ENCODE measurements at regions of chr1 and their contacts with region 1.

Region 1: DNA sequence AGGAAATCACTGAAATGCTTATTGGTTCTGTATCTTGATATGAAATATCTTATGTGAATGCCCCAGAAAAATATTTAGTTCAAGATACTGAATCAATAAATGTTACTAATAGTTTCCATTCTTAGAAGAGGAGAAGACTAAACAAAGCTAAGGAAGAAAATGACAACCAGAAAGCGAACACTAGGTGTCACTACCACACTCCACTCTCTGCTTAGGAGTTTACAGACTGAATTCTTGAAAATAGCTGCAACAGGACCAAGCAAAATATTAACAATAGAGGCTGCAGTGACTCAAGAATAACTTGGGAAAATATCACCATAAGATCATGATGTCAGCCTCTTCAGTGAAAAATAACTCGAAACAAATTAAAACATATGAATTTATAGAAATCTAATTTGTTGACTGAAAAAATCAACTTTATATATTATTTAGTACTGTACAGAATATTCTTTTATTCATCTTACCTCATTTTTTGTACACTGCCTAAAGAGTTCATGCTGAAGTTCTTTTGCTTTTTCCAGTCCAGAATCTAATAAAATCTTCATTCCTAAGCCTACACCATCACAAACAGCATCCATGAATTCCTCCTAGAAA is 61.6 kb downstream of the KIF14 start:
- DNase-seq: peak; percentile 44
- H3K4me3 Mint-ChIP-seq: no peak overlapping the region
- H3K27ac Mint-ChIP-seq: no peak overlapping the region
- H3K4me1 Mint-ChIP-seq: peaks cover 11% of the 10 kb centered on the region
- H3K27me3 Mint-ChIP-seq: no peaks in the 10 kb centered on the region

Region 2: GRCh38 chr1:200530623-200531261 is 28.2 kb before region 1 on chr1:
- CTCF ChIA-PET with region 1: interaction called, 5 read pairs
- intact Hi-C with region 1: loop called (anchors 2 kb)
- DNase-seq: peak; percentile 69
- H3K4me3 Mint-ChIP-seq: peak overlapping the region; percentile 36
- H3K27ac Mint-ChIP-seq: peak overlapping the region; percentile 38
- H3K4me1 Mint-ChIP-seq: peaks cover 38% of the 10 kb centered on the region
- H3K27me3 Mint-ChIP-seq: no peaks in the 10 kb centered on the region

Region 3: GRCh38 chr1:200802865-200803512 is 244.0 kb after region 1 on chr1:
- CTCF ChIA-PET with region 1: interaction called, 10 read pairs
- intact Hi-C with region 1: loop called (anchors 1 kb)
- DNase-seq: peak; percentile 90
- H3K4me3 Mint-ChIP-seq: no peak overlapping the region
- H3K27ac Mint-ChIP-seq: no peak overlapping the region
- H3K4me1 Mint-ChIP-seq: peaks cover 4% of the 10 kb centered on the region
- H3K27me3 Mint-ChIP-seq: no peaks in the 10 kb centered on the region

Region 4: DNA sequence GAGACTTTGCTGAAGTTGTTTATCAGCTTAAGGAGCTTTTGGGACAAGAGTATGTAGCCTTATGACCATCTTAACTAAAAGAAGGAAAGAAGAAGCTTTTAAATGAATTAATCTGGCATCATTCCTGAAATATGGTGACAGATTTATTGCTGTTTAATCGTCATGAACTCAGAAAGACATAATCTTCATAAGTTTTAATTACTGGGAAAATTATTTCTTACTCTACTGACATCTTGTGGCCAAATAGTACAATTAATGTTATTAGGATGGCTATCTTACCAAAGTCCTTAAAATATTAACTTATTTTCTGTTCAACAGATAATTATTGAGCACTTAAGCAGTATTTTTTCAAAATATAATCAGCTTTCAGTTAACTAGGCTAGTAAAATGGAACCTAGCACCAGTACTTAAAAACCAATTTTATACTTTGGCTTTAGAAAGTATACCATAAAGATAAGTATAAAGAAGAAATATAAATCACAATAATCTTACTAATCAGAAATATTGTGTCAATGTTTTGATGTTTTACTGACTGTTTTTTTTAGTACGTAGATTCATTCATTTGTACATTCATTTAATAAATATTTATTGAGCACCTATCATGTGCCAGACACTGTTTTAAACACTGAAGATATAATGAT is 279.1 kb after region 1 on chr1:
- CTCF ChIA-PET with region 1: interaction called, 3 read pairs
- intact Hi-C with region 1: loop called (anchors 1 kb)
- DNase-seq: no peak
- H3K4me3 Mint-ChIP-seq: no peak overlapping the region
- H3K27ac Mint-ChIP-seq: no peak overlapping the region
- H3K4me1 Mint-ChIP-seq: no peaks in the 10 kb centered on the region
- H3K27me3 Mint-ChIP-seq: no peaks in the 10 kb centered on the region

Region 5: DNA sequence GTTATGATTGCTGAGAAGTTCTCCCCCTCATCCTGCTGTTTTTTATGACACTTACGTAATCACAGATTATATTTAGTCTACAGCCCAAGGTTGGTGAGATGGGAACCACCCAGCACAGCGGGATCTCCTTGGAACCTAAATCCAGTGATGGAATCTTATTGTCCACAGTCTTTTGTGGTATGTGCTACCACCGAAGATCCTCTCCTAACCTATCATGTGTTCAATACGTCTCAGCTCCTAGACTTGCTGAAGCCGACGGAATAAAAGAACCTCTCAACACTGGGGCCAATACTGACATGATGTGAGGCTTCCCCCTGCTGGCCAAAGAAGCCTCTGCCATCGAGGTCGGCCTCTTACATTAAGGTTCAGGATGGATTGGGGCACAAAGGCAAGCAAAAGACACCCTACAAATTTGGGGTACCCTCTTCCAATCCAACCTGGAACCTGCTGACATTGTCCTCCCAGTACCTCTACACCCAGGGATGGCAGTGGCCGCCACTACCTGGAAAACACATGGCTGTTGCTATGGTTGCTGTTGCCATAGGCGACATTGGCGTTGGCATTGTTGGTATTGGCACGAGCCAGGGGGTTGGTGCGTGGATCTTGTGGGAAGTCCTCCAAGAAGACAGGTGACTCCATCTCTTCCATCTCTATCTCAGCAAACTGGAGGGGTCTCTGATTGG is 484.0 kb after region 1 on chr1:
- CTCF ChIA-PET with region 1: no interaction called
- intact Hi-C with region 1: loop called (anchors 1 kb)
- DNase-seq: peak; percentile 83
- H3K4me3 Mint-ChIP-seq: no peak overlapping the region
- H3K27ac Mint-ChIP-seq: no peak overlapping the region
- H3K4me1 Mint-ChIP-seq: no peaks in the 10 kb centered on the region
- H3K27me3 Mint-ChIP-seq: no peaks in the 10 kb centered on the region

Measured in activated naive CD4-positive, alpha-beta T cell treated with anti-CD3 and anti-CD28 coated beads for 36 hours (primary cell).